ENCODE measurements at regions of chr3 and their contacts with region 1.

Region 1: DNA sequence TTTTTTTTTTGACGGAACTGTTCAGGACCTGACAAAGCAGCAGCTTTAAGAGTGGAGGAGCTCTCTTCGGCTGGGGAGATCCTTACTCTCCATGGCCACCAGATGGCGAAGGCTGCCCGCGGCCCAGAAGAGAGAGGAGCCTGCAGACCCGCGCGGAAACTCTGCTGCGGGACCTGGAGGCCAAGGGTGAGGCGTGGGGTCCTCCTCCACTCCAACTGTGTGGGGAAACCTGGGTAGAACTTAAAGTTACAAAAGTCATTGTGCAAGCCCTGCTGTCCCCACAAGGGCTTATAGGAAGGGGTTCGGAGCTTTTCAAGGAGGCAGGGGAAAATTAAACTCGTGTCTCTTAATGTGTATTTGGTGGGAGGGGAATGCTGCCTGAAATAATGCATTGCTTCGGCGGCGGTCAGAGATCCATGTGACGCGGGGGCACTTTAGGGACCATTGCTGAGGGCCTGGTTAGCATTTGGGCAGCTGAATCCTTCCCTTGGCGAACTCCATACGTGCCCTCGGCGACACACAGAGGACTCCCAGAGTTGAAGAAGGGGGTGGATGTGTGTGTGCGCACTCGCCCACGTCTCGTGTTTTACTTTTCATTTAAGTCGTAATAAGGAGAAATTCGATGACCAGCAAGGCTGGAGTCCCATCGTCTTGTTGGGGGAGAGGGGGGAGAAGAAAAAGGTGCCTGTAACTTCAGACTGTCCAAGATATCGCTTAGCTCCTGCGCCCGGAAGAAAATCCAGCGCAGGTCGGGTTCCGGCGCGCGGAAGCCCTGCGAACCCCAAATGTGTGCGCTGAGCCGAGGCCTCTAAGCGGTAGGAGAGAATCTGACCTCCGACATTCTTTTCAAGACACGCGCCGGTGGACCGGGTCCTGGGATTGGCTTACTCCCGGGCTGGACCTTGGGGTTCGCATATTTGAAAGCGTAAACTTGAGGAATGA is 9.7 kb downstream of the EOMES start:
- DNase-seq: peak; percentile 78
- ATAC-seq: peak; percentile 68
- H3K4me3 Mint-ChIP-seq: peak overlapping the region; percentile 82
- H3K27ac Mint-ChIP-seq: no peak overlapping the region
- H3K4me1 Mint-ChIP-seq: peaks cover 48% of the 10 kb centered on the region
- H3K27me3 Mint-ChIP-seq: peaks cover 84% of the 10 kb centered on the region
- CTCF ChIP-seq: peak; percentile 62

Region 2: GRCh38 chr3:27681245-27681748 is 31.1 kb before region 1 on chr3:
- CTCF ChIA-PET with region 1: interaction called, 19 read pairs
- POLR2A ChIA-PET with region 1: no interaction called
- DNase-seq: no peak
- ATAC-seq: peak; percentile 61
- H3K4me3 Mint-ChIP-seq: peak overlapping the region; percentile 56
- H3K27ac Mint-ChIP-seq: peak overlapping the region; percentile 98
- H3K4me1 Mint-ChIP-seq: peaks cover 27% of the 10 kb centered on the region
- H3K27me3 Mint-ChIP-seq: no peaks in the 10 kb centered on the region
- CTCF ChIP-seq: peak; percentile 60

Region 3: GRCh38 chr3:27728195-27729087 is 16.0 kb after region 1 on chr3:
- CTCF ChIA-PET with region 1: interaction called, 120 read pairs
- POLR2A ChIA-PET with region 1: no interaction called
- DNase-seq: peak; percentile 91
- ATAC-seq: peak; percentile 54
- H3K4me3 Mint-ChIP-seq: peak overlapping the region; percentile 69
- H3K27ac Mint-ChIP-seq: peak overlapping the region; percentile 48; the same call in 1 of the 2 replicates
- H3K4me1 Mint-ChIP-seq: peaks cover 80% of the 10 kb centered on the region
- H3K27me3 Mint-ChIP-seq: peaks cover 100% of the 10 kb centered on the region
- CTCF ChIP-seq: no peak

Region 4: DNA sequence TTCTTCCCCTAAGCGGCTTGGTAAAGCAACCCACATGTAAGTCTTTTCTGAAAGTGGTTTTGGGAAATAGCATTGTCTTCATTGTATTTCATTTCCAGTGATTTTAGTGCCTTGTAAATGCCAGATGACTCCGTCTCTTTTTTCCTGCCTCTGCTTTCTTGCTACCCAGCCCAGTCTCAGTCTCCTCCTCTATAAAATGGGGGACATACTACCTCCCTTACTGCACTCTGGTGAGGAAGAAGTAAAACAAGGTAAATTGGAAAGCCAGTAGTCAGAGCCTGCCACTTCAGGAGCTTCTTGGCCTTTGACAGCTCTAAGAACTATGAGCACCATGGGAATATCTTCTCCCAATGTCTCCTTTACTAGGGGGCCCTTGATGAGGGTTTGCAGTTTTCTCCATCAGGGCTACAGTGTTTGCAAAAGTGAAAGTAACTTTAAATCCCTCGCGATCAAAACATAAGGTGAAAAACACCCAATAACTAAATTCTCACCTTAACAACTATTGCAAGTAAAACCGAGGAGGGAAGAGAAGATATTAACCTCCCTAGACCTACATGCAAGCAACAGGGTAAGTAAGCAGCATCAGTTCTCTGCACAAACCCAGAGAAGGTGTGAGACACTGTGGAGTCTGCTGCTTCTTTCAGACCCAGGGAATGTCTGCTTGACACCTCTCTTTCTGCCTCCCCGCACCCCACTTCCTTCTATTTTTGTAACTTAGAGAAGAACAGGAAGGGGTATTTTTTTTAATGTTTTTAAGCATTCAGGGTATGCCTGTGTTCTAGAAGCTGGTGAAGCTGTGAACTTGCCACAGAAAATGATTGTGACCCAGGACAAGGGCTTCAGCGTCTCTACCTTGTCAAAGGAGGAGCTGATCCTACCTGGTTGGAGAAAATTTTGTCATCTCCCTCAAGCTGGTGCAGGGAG is 168.8 kb after region 1 on chr3:
- CTCF ChIA-PET with region 1: interaction called, 11 read pairs
- POLR2A ChIA-PET with region 1: no interaction called
- DNase-seq: no peak
- ATAC-seq: no peak
- H3K4me3 Mint-ChIP-seq: no peak overlapping the region
- H3K27ac Mint-ChIP-seq: no peak overlapping the region
- H3K4me1 Mint-ChIP-seq: peaks cover 36% of the 10 kb centered on the region
- H3K27me3 Mint-ChIP-seq: peaks cover 58% of the 10 kb centered on the region
- CTCF ChIP-seq: no peak

Region 5: DNA sequence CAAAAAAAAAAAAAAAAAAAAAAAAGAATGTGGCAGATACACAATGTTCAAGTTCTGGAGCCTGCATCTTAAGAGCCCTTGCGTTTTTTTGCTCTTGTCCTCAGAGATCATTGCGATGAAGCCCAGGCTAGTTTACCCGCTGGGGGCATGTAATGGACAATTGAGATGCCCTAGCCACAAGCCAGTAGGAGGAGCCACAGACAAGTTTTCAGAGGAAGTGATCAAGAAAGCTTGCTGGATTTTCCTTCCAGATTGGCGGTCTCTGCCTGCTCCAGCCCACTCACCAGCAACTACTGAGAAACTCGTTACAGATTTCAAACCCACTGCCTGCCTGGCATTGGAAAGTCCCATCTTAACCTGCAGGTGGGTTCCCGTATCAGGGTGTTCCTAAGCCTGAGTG is 201.8 kb after region 1 on chr3:
- CTCF ChIA-PET with region 1: interaction called, 10 read pairs
- POLR2A ChIA-PET with region 1: no interaction called
- DNase-seq: peak; percentile 34
- ATAC-seq: peak; percentile 91
- H3K4me3 Mint-ChIP-seq: no peak overlapping the region
- H3K27ac Mint-ChIP-seq: no peak overlapping the region
- H3K4me1 Mint-ChIP-seq: peaks cover 3% of the 10 kb centered on the region
- H3K27me3 Mint-ChIP-seq: no peaks in the 10 kb centered on the region
- CTCF ChIP-seq: no peak

Region 6: GRCh38 chr3:28328188-28329151 is 616.1 kb after region 1 on chr3:
- CTCF ChIA-PET with region 1: interaction called, 29 read pairs
- POLR2A ChIA-PET with region 1: no interaction called
- DNase-seq: no peak
- ATAC-seq: no peak
- H3K4me3 Mint-ChIP-seq: no peak overlapping the region
- H3K27ac Mint-ChIP-seq: no peak overlapping the region
- H3K4me1 Mint-ChIP-seq: no peaks in the 10 kb centered on the region
- H3K27me3 Mint-ChIP-seq: no peaks in the 10 kb centered on the region
- CTCF ChIP-seq: peak; percentile 66